Gastrocnemius medialis (tissue), 4 donors: ENCODE measurements at regions of chr6 and their contacts with region 1.

Region 1: DNA sequence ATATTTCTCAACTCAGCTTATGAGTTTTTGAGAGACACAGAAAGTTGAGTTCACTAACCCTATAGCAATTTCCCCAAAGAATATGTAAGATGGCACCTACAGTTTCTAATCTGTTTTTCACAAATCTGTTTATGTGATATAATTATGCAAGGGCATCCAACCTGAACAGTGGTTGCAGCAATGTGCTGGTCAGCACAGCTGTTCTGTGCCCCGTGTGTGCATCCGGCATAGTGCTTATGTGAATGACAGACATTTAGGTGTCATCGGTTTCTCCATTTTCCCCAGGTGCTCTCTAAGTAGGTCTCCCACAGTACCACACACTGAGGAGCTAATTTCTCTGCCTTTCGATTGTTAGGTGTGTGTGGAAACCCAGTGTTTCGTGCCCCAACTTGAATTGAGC is 7.7 kb upstream of the BACH2 start:
- DNase-seq: no peak
- ATAC-seq: no peak
- H3K4me3 ChIP-seq: no peak overlapping the region
- H3K27ac ChIP-seq: no peak overlapping the region
- H3K4me1 ChIP-seq: no peaks in the 10 kb centered on the region
- H3K27me3 ChIP-seq: no peaks in the 10 kb centered on the region
- CTCF ChIP-seq: no peak
- POLR2A ChIP-seq: no peak

Region 2: GRCh38 chr6:90261801-90262200 is 42.5 kb before region 1 on chr6:
- in situ Hi-C with region 1: no loop called
- intact Hi-C with region 1: loop called (anchors 1 kb)
- DNase-seq: no peak
- ATAC-seq: no peak
- H3K4me3 ChIP-seq: no peak overlapping the region
- H3K27ac ChIP-seq: no peak overlapping the region
- H3K4me1 ChIP-seq: peaks cover 0 to 4% of the 10 kb centered on the region in 2 donors
- H3K27me3 ChIP-seq: no peaks in the 10 kb centered on the region
- CTCF ChIP-seq: no peak
- POLR2A ChIP-seq: no peak